Lower leg skin (tissue), 4 donors: ENCODE measurements at regions of chr11 and their contacts with region 1.

Region 1: GRCh38 chr11:97786961-97787360 is 1233.8 kb upstream of the CNTN5 start:
- DNase-seq: no peak
- H3K4me3 ChIP-seq: no peak overlapping the region
- CTCF ChIP-seq: no peak
- POLR2A ChIP-seq: no peak

Region 2: GRCh38 chr11:97856666-97857065 is 69.7 kb after region 1 on chr11:
- intact Hi-C with region 1: loop called (anchors 2 kb)
- DNase-seq: no peak
- H3K4me3 ChIP-seq: no peak overlapping the region
- CTCF ChIP-seq: no peak
- POLR2A ChIP-seq: no peak